Lower lobe of right lung (tissue), 2 donors: ENCODE measurements at regions of chr10 and their contacts with region 1.

Region 1: GRCh38 chr10:50624866-50625692 is 1.3 kb upstream of the SGMS1 start:
- DNase-seq: peak; percentile 80
- ATAC-seq: peak; percentile 82 to 86
- H3K4me3 ChIP-seq: peak overlapping the region; percentile 92
- H3K27ac ChIP-seq: peak overlapping the region; percentile 96
- H3K4me1 ChIP-seq: peaks cover 21% of the 10 kb centered on the region
- H3K27me3 ChIP-seq: no peaks in the 10 kb centered on the region
- CTCF ChIP-seq: peak; percentile 58

Region 2: DNA sequence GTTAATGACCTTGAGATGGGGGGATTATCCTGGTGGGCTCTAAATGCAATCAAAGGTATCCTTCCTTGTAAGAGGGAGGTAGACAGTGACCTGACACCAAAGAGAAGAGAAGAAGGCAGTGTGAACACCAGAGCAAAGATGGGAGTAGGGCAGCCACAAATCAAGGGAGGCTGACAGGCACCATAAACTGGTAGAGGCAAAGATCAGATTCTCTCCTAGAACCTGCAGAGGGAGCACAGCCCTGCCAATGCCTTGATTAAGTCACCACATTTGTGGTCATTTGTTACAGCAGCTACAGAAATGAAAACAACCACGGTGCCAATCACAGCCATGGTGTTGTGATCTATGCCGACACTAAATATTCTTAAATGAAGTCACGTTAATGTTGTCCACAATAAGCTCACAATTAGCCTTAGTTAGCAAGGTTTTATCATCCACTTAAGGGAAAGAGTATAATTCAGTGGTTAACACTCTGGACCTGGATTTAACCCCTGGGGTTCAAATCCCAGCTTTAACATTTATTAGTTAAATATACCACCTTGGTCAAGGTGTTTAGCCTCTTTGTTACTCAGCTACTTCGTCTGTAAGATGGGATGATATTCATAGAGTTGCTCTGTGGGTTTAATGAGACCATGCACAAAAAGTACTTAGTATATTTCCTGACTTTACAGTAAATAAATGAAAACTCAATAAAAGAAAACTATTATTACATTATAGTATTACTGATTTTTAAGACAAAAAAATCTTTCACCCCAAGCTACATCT is 72.1 kb before region 1 on chr10:
- intact Hi-C with region 1: loop called (anchors 10 kb)
- DNase-seq: no peak
- ATAC-seq: peak; percentile 67 to 77
- H3K4me3 ChIP-seq: no peak overlapping the region
- H3K27ac ChIP-seq: no peak overlapping the region
- H3K4me1 ChIP-seq: peaks cover 37% of the 10 kb centered on the region
- H3K27me3 ChIP-seq: no peaks in the 10 kb centered on the region
- CTCF ChIP-seq: peak; percentile 37